ENCODE measurements at regions of chr18 and their contacts with region 1.

Region 1: GRCh38 chr18:73118121-73118816 is 250.5 kb upstream of the NETO1 start:
- DNase-seq: no peak
- ATAC-seq: no peak
- H3K4me3 ChIP-seq: no peak overlapping the region
- H3K27ac ChIP-seq: no peak overlapping the region
- H3K4me1 ChIP-seq: no peaks in the 10 kb centered on the region
- H3K27me3 ChIP-seq: no peaks in the 10 kb centered on the region
- CTCF ChIP-seq: no peak
- POLR2A ChIP-seq: no peak

Region 2: GRCh38 chr18:72783530-72783929 is 334.7 kb before region 1 on chr18:
- intact Hi-C with region 1: loop called in 1 of 10 experiments (anchors 10 kb)
- DNase-seq: no peak
- ATAC-seq: no peak
- H3K4me3 ChIP-seq: no peak overlapping the region
- H3K27ac ChIP-seq: no peak overlapping the region
- H3K4me1 ChIP-seq: no peaks in the 10 kb centered on the region
- H3K27me3 ChIP-seq: no peaks in the 10 kb centered on the region
- CTCF ChIP-seq: no peak
- POLR2A ChIP-seq: no peak

Measured in heart left ventricle (tissue), 16 donors.